ENCODE measurements at regions of chr6 and their contacts with region 1.

Region 1: GRCh38 chr6:29705389-29706231 is 17.6 kb upstream of the HLA-F start:
- DNase-seq: peak in 2 of 10 donors; percentile 17 to 22

Region 2: GRCh38 chr6:29752451-29753308 is 47.1 kb after region 1 on chr6:
- intact Hi-C with region 1: loop called (anchors 5 kb)
- DNase-seq: peak; percentile 70 to 95 (median 80)

Region 3: GRCh38 chr6:29834564-29835436 is 129.2 kb after region 1 on chr6:
- intact Hi-C with region 1: loop called (anchors 2 kb)
- DNase-seq: peak in 3 of 10 donors; percentile 44 to 73 (median 51)

Region 4: DNA sequence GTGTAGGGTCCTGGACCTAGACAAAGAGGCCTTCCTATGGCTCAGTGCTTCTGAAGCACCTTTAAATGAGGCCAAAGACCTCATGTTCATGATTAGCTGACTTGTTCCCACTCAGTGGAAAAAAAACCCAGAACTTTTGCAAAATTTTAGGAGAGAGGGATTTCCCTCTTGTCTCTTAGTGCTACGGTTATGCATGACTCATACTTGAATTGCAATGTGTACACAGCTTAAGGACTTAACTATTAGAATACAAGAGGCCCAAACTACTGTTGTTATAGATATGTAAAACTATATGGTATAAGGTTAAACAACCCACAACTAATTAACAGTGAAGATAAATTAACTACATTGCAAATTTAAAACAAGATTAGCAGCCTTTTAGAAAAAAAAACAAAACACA is 204.4 kb after region 1 on chr6:
- intact Hi-C with region 1: no loop called
- DNase-seq: no peak

Region 5: GRCh38 chr6:30013291-30013922 is 307.8 kb after region 1 on chr6:
- intact Hi-C with region 1: loop called (anchors 10 kb)
- DNase-seq: peak in 1 of 10 donors; percentile 37

Region 6: GRCh38 chr6:30376486-30376885 is 670.9 kb after region 1 on chr6:
- intact Hi-C with region 1: no loop called
- DNase-seq: no peak